Activated CD4-positive, alpha-beta memory T cell treated with anti-CD3 and anti-CD28 coated beads for 36 hours (primary cell): ENCODE measurements at regions of chr21 and their contacts with region 1.

Region 1: DNA sequence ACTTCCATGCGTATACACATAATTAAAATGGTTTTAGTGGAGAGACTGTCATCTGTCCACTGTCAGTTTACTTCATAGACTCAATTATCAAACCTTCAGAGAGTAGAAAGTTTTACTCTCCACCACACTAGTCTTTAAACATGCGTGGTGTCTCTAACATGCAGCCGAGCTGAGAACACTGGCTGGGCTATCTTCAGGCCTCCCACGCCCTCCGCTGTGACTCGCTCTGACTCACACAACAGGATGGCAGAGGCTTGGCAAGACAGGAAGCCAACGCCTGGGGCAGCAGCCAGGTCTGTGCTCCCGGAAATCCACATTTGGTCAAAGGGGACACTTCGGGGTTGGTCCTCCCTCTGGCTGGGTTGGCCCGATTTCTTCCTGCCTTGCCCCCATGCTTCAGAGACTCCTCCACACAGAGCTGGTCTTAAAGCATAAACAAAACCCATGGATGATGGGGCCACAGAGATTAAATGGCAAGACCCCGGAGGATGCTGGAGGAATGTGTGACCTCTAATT is 22.7 kb upstream of the IFNGR2 start:
- DNase-seq: peak; percentile 97
- H3K4me3 Mint-ChIP-seq: peak overlapping the region; percentile 44
- H3K27ac Mint-ChIP-seq: peak overlapping the region; percentile 81
- H3K4me1 Mint-ChIP-seq: peaks cover 61% of the 10 kb centered on the region
- H3K27me3 Mint-ChIP-seq: peaks cover 10% of the 10 kb centered on the region

Region 2: DNA sequence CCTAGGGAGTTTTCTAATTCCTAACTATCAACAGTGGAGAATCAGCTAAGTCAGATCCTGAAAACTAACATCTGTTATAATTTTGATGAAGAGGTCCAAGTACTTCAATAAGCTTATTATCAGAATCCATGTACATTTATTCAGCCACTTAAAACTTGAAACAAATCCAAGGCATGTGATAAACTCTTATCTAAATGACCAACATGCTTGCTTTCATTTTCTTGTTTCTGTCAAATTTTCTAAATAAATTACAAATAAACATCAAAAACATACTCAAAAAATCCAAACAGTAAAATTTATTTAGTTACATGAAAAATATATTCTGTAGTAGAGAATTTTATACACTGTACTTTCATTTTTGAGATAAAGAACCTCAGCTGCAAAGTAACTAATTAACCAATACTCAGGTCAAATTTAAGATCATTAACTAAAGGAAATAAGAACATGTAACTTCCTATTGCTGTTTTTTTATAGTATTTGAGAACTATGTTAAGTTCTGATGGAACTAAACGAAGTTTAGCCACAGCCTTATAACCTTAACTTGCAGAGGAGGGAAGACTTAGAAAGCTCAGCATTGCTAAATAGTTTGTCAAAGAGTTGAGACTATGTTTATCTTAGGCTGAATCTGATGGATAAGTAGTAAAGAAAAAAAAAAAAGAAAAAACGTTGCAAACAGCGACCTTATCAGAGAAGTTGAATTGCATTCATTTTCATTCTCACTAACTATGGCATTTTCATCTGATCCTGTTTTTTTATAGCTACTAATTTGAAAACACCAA is 697.7 kb before region 1 on chr21:
- CTCF ChIA-PET with region 1: no interaction called
- POLR2A ChIA-PET with region 1: no interaction called
- intact Hi-C with region 1: no loop called
- DNase-seq: no peak
- H3K4me3 Mint-ChIP-seq: no peak overlapping the region
- H3K27ac Mint-ChIP-seq: no peak overlapping the region
- H3K4me1 Mint-ChIP-seq: no peaks in the 10 kb centered on the region
- H3K27me3 Mint-ChIP-seq: no peaks in the 10 kb centered on the region

Region 3: DNA sequence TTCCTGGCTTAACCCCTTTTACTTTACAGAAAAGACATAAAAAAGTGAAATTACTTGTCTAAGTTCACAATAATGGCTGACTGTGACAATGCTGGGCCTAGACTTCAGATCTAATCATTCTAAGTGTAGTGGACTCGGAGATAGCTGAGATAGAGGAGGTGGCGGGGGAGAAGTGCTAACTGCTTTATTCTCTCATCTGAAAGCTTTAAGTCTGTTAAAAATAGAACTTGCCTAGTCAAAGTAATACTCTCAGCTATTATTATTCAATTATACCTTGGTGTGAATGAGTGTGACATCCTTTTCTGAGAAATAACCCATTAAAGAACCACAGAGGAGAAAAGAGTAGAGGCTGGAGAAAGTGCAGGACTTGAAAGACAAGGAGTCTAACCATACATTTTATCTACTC is 450.9 kb before region 1 on chr21:
- CTCF ChIA-PET with region 1: no interaction called
- POLR2A ChIA-PET with region 1: no interaction called
- intact Hi-C with region 1: loop called (anchors 2 kb)
- DNase-seq: peak; percentile 34
- H3K4me3 Mint-ChIP-seq: peak overlapping the region; percentile 33
- H3K27ac Mint-ChIP-seq: peak overlapping the region; percentile 43
- H3K4me1 Mint-ChIP-seq: peaks cover 40% of the 10 kb centered on the region
- H3K27me3 Mint-ChIP-seq: no peaks in the 10 kb centered on the region

Region 4: GRCh38 chr21:33324291-33325221 is 56.0 kb before region 1 on chr21 and contains the start of gene IFNAR1:
- CTCF ChIA-PET with region 1: no interaction called
- POLR2A ChIA-PET with region 1: interaction called, 5 read pairs
- intact Hi-C with region 1: loop called (anchors 2 kb)
- DNase-seq: peak; percentile 99
- H3K4me3 Mint-ChIP-seq: no peak within 1 kb of the TSS
- H3K27ac Mint-ChIP-seq: no peak within 1 kb of the TSS
- H3K4me1 Mint-ChIP-seq: peaks cover 26% of the 10 kb centered on the region
- H3K27me3 Mint-ChIP-seq: no peaks in the 10 kb centered on the region
- total RNA-seq, gene IFNAR1: 28.0 to 32.0 TPM

Region 5: GRCh38 chr21:33434770-33435360 is 54.3 kb after region 1 on chr21:
- CTCF ChIA-PET with region 1: interaction called, 5 read pairs
- POLR2A ChIA-PET with region 1: interaction called, 8 read pairs
- intact Hi-C with region 1: loop called (anchors 1 kb)
- DNase-seq: peak; percentile 44
- H3K4me3 Mint-ChIP-seq: peak overlapping the region; percentile 28
- H3K27ac Mint-ChIP-seq: peak overlapping the region; percentile 76
- H3K4me1 Mint-ChIP-seq: peaks cover 27% of the 10 kb centered on the region
- H3K27me3 Mint-ChIP-seq: no peaks in the 10 kb centered on the region

Region 6: GRCh38 chr21:33479679-33480480 is 99.3 kb after region 1 on chr21 and contains the start of gene TMEM50B:
- CTCF ChIA-PET with region 1: no interaction called
- POLR2A ChIA-PET with region 1: interaction called, 3 read pairs
- intact Hi-C with region 1: loop called (anchors 1 kb)
- DNase-seq: peak; percentile 99
- H3K4me3 Mint-ChIP-seq: peak within 1 kb of the TSS; percentile 92
- H3K27ac Mint-ChIP-seq: peak within 1 kb of the TSS; percentile 79
- H3K4me1 Mint-ChIP-seq: peaks cover 19% of the 10 kb centered on the region
- H3K27me3 Mint-ChIP-seq: no peaks in the 10 kb centered on the region
- total RNA-seq, gene TMEM50B: 18.6 to 21.8 TPM

Region 7: DNA sequence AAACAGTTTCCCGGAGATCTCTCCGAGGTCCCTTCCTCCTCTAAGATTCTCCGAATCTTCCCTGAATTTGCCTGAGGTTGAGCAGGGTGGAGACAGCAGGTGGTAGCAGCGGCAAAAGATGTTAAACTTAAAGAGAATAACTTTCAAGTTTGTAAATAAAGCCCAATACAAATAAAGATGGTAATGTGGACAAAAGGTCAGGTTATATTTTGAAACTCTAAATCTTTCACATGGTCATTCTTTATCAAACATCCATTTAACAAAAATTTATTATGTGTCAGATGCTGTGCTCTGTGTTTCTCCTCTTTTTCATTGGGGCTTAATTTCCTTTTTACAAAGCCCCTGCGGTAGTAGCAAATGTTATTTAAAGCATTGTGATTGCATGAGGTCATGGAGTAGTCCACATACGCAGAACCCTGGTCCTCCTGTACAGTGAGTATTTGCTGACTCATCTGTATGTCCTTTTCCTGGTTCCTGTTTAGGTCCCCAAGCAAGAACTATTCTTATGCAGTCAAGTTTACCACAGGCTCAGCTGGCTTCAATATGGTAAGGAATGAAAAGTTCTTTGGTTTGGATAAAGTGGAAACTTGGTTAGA is 381.0 kb after region 1 on chr21:
- CTCF ChIA-PET with region 1: no interaction called
- POLR2A ChIA-PET with region 1: no interaction called
- intact Hi-C with region 1: no loop called
- DNase-seq: no peak
- H3K4me3 Mint-ChIP-seq: no peak overlapping the region
- H3K27ac Mint-ChIP-seq: no peak overlapping the region
- H3K4me1 Mint-ChIP-seq: no peaks in the 10 kb centered on the region
- H3K27me3 Mint-ChIP-seq: no peaks in the 10 kb centered on the region